ENCODE measurements at regions of chr6 and their contacts with region 1.

Region 1: DNA sequence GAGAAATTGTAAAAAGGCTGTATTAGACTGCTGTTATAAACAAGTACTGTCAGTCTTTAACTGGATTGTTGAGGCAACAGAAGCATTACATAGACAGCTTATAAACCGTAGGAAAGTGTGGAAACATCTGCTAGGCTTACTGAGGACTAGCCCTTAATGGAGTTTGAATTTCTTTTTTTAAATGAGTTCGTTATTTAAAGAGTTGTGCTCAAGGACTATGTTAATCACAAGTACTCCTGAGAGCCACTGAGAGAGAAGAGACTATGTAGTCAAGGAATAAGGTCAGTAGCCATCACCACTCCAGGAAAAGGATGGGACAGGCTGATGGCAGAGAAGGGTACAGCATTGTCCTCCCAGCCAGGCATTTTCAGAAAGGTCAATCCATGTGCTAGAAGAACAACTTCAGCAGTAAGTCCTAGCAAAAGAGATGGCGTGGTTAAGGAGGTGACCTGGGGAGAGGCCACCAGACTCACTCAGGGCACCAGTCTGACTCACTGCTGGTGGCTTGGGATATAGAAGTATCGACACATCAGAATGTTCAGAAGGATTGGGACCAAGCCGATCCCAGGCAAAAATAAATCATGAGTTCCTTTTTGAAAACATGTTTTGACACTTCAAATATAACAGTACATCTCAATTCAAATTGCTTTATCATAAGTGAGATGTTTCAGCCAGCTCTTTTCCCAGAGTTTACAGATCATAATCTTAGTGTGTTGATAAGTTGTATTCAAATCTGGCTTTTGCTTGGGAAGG is 6.4 kb downstream of the RPS12 start:
- DNase-seq: no peak
- ATAC-seq: peak; percentile 21
- H3K4me3 ChIP-seq: no peak overlapping the region
- H3K4me3 Mint-ChIP-seq: no peak overlapping the region
- H3K27ac ChIP-seq: peak overlapping the region; percentile 17
- H3K27ac Mint-ChIP-seq: peak overlapping the region in 8 of 9 donors; percentile 55 to 88 (median 86)
- H3K4me1 ChIP-seq: peaks cover 14 to 18% of the 10 kb centered on the region in 2 donors
- H3K4me1 Mint-ChIP-seq: peaks cover 28 to 64% (median 59%) of the 10 kb centered on the region in 7 donors
- H3K27me3 ChIP-seq: no peaks in the 10 kb centered on the region
- H3K27me3 Mint-ChIP-seq: peaks cover 0 to 2% (median 0%) of the 10 kb centered on the region in 5 donors

Region 2: GRCh38 chr6:132962936-132963868 is 142.4 kb after region 1 on chr6:
- CTCF ChIA-PET with region 1: interaction called, 3 read pairs
- POLR2A ChIA-PET with region 1: no interaction called
- intact Hi-C with region 1: loop called (anchors 2 kb)
- DNase-seq: peak in 7 of 9 donors; percentile 6 to 64 (median 20)
- ATAC-seq: peak; percentile 65
- H3K4me3 ChIP-seq: no peak overlapping the region
- H3K4me3 Mint-ChIP-seq: no peak overlapping the region
- H3K27ac ChIP-seq: no peak overlapping the region
- H3K27ac Mint-ChIP-seq: no peak overlapping the region
- H3K4me1 ChIP-seq: no peaks in the 10 kb centered on the region
- H3K4me1 Mint-ChIP-seq: peaks cover 0 to 29% (median 0%) of the 10 kb centered on the region in 7 donors
- H3K27me3 ChIP-seq: no peaks in the 10 kb centered on the region
- H3K27me3 Mint-ChIP-seq: peaks cover 20 to 49% (median 36%) of the 10 kb centered on the region in 5 donors

Region 3: GRCh38 chr6:133512410-133513016 is 691.7 kb after region 1 on chr6:
- CTCF ChIA-PET with region 1: no interaction called
- POLR2A ChIA-PET with region 1: no interaction called
- intact Hi-C with region 1: loop called in 1 of 2 experiments (anchors 1 kb)
- DNase-seq: peak in 2 of 9 donors; percentile 4 to 13
- ATAC-seq: no peak
- H3K4me3 ChIP-seq: no peak overlapping the region
- H3K4me3 Mint-ChIP-seq: no peak overlapping the region
- H3K27ac ChIP-seq: no peak overlapping the region
- H3K27ac Mint-ChIP-seq: no peak overlapping the region
- H3K4me1 ChIP-seq: no peaks in the 10 kb centered on the region
- H3K4me1 Mint-ChIP-seq: no peaks in the 10 kb centered on the region
- H3K27me3 ChIP-seq: no peaks in the 10 kb centered on the region
- H3K27me3 Mint-ChIP-seq: peaks cover 3 to 28% (median 15%) of the 10 kb centered on the region in 5 donors

Region 4: GRCh38 chr6:133553652-133554051 is 732.8 kb after region 1 on chr6:
- CTCF ChIA-PET with region 1: no interaction called
- POLR2A ChIA-PET with region 1: no interaction called
- intact Hi-C with region 1: loop called in 1 of 2 experiments (anchors 1 kb)
- DNase-seq: peak in 5 of 9 donors; percentile 7 to 23 (median 14)
- ATAC-seq: no peak
- H3K4me3 ChIP-seq: no peak overlapping the region
- H3K4me3 Mint-ChIP-seq: no peak overlapping the region
- H3K27ac ChIP-seq: no peak overlapping the region
- H3K27ac Mint-ChIP-seq: no peak overlapping the region
- H3K4me1 ChIP-seq: no peaks in the 10 kb centered on the region
- H3K4me1 Mint-ChIP-seq: no peaks in the 10 kb centered on the region
- H3K27me3 ChIP-seq: no peaks in the 10 kb centered on the region
- H3K27me3 Mint-ChIP-seq: peaks cover 0 to 6% (median 0%) of the 10 kb centered on the region in 5 donors

Measured in naive thymus-derived CD4-positive, alpha-beta T cell (primary cell).